Lower leg skin (tissue), 4 donors: ENCODE measurements at regions of chr14 and their contacts with region 1.

Region 1: GRCh38 chr14:64788668-64789067 is 84.4 kb downstream of the PLEKHG3 start:
- DNase-seq: no peak
- H3K4me3 ChIP-seq: no peak overlapping the region
- CTCF ChIP-seq: no peak
- POLR2A ChIP-seq: no peak

Region 2: GRCh38 chr14:64450255-64450654 is 338.4 kb before region 1 on chr14:
- intact Hi-C with region 1: loop called (anchors 10 kb)
- DNase-seq: no peak
- H3K4me3 ChIP-seq: no peak overlapping the region
- CTCF ChIP-seq: no peak
- POLR2A ChIP-seq: no peak